Mammary epithelial cell (primary cell): ENCODE measurements at regions of chr5 and their contacts with region 1.

Region 1: GRCh38 chr5:159274676-159275075 is 11.6 kb downstream of the UBLCP1 start:
- DNase-seq: no peak
- H3K4me3 ChIP-seq: no peak overlapping the region
- H3K27ac ChIP-seq: no peak overlapping the region
- H3K4me1 ChIP-seq: no peaks in the 10 kb centered on the region
- H3K27me3 ChIP-seq: no peaks in the 10 kb centered on the region
- CTCF ChIP-seq: no peak

Region 2: DNA sequence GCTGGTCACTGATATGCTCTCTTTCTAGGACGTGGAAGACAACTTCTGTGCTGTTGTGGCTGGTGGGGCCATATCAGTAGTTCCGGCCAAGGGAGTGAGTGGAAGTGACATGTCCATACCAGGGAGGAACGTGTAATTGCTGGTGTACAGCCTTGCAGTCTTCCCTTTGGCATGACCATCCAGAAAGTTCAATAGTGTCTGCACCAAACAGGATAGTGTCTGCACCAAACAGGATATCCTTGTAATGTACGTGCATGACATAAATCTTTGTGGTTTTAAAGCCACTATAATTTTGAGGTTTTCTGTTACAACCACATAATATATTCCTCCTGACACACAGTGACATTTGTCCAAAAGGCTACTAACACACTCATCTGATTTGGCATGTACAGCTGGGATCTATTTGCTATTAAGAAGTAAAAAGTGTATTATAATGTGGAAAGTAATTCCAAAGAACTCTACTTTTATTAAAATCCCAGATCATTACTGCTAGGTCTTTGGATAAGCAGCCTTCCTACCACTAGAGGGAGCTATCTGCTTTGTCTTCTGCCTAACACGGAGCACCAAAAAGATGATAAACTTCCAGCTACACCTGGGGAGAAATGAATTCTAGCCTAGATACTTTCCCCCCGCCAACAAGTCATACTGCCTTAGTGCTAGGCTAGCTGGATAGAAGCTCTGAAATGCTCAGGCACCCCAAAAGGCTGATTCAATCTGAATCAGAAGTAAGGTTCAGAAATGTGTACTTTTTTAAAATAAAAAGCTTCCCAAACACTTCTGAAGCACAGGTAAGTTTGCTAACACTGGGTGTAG is 118.0 kb before region 1 on chr5:
- CTCF ChIA-PET with region 1: no interaction called
- dilution Hi-C with region 1: no loop called
- in situ Hi-C with region 1: loop called (anchors 10 to 25 kb)
- intact Hi-C with region 1: no loop called
- DNase-seq: peak; percentile 65
- H3K4me3 ChIP-seq: no peak overlapping the region
- H3K27ac ChIP-seq: no peak overlapping the region
- H3K4me1 ChIP-seq: peaks cover under 1% of the 10 kb centered on the region
- H3K27me3 ChIP-seq: no peaks in the 10 kb centered on the region
- CTCF ChIP-seq: peak; percentile 84 to 87

Region 3: DNA sequence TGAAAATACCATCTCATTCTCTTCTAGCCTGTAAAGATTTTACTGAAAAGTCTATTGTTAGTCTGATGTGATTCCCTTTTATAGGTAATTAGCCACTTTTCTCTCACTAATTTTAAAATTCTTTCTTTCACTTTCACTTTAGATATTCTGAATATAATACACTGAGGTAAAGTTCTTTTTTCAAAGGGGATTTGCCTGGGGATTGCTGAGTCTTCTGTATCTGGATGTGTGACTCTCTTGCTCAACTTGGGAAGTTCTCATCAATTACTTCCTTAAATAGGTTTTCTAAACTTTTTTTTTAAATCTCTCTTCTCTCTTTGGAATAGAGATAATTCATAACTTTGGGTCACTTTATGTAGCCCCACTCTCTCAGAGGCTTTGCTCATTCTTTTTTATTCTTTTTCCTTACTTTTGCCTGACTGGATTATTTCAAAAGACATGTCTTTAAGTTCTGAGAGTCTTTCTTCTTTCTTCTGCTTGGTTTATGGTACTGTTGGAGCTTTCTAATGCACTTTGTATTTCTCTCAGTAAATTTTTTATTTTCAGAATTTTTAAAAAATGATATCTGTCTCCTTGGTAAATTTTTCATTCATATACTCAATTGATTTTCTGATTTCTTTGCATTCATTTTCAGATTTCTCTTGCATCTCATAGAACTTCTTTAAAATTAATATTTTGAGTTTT is 111.5 kb after region 1 on chr5:
- CTCF ChIA-PET with region 1: no interaction called
- dilution Hi-C with region 1: no loop called
- in situ Hi-C with region 1: no loop called
- intact Hi-C with region 1: no loop called
- DNase-seq: no peak
- H3K4me3 ChIP-seq: no peak overlapping the region
- H3K27ac ChIP-seq: no peak overlapping the region
- H3K4me1 ChIP-seq: no peaks in the 10 kb centered on the region
- H3K27me3 ChIP-seq: no peaks in the 10 kb centered on the region
- CTCF ChIP-seq: no peak